HCT116 (cell line): ENCODE measurements at regions of chr17 and their contacts with region 1.

Region 1: GRCh38 chr17:48908047-48908843 is at the start of gene UBE2Z:
- DNase-seq: peak; percentile 94
- ATAC-seq: peak; percentile 92
- H3K4me3 ChIP-seq: peak within 1 kb of the TSS; percentile 70 to 84
- H3K27ac ChIP-seq: peak within 1 kb of the TSS; percentile 92
- H3K4me1 ChIP-seq: peaks cover 18 to 26% of the 10 kb centered on the region in 2 experiments
- H3K27me3 ChIP-seq: no peaks in the 10 kb centered on the region
- CTCF ChIP-seq: 0 out of 6 replicates have a peak, but pooled peaks of 1 of the 3 experiments have one; percentile 9
- POLR2A ChIP-seq: peak; percentile 94
- RAD21 ChIP-seq: no peak
- total RNA-seq, gene UBE2Z: 119 TPM

Region 2: DNA sequence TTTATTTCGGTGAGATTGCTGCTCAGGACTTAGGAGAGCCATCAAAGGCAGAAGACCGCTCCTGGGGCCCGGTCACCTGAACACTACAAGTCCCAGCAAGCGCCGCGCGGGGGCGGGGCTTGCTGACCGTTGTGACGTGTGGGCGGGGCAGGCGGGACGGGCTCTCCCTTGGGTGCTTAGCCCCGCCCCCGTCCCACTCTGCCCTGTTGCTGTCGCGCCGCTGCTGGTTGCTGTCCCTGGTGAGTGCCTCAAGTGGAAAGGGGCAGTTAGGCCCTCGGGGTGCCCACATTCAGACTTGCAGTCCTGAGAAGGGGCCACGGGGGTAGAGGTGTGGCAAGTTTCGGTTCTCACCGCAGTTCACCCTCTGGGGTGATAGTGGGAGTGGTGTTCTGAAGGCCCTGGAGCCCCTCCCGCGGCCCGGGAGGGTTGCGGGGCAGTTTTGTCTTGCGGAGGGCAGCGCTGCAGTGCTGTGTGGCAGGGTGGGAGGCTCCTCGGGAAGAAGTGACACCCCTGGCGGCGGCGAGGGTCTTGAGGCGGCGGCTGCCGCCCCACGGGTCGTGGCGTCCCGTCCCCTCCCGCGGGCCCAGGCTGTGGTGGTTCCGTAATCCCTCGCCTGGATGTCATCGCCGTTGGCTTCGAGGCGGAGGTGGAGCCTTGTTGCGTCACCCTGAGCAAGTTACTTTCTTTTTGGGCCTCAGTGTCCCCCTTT is 77.3 kb before region 1 on chr17 and contains the start of gene CALCOCO2:
- CTCF ChIA-PET with region 1: no interaction called
- POLR2A ChIA-PET with region 1: no interaction called
- RAD21 ChIA-PET with region 1: no interaction called
- intact Hi-C with region 1: loop called (anchors 2 kb)
- DNase-seq: peak; percentile 94
- ATAC-seq: peak; percentile 98
- H3K4me3 ChIP-seq: peak within 1 kb of the TSS; percentile 85 to 91
- H3K27ac ChIP-seq: peak within 1 kb of the TSS; percentile 66
- H3K4me1 ChIP-seq: peaks cover 5 to 32% of the 10 kb centered on the region in 2 experiments; a peak in 2 of 4 replicates
- H3K27me3 ChIP-seq: no peaks in the 10 kb centered on the region
- CTCF ChIP-seq: peak in 2 of 3 experiments; percentile 9 to 11; a peak in 1 of 6 replicates
- POLR2A ChIP-seq: peak; percentile 74
- RAD21 ChIP-seq: no peak
- total RNA-seq, gene CALCOCO2: 151 TPM

Region 3: DNA sequence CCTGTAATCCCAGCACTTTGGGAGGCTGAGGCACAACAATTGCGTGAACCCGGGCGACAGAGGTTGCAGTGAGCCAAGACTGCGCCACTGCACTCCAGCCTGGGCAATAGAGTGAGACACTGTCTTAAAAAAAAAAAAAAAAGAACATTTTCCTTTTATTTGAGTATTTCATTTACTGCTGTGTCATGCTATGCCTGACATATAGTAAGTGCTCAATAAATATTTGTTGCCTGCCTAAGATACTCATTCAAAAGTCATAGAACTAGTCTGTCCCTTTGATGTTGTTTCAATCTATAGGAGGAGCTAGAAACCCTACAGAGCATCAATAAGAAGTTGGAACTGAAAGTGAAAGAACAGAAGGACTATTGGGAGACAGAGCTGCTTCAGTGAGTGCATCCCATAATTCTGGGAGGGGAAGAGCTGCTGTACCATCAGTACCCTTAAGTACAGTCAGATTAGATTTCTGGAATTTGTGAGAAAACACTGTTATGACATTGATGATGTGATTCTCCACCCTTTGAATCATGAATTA is 57.4 kb before region 1 on chr17:
- CTCF ChIA-PET with region 1: no interaction called
- POLR2A ChIA-PET with region 1: no interaction called
- RAD21 ChIA-PET with region 1: no interaction called
- intact Hi-C with region 1: no loop called
- DNase-seq: no peak
- ATAC-seq: no peak
- H3K4me3 ChIP-seq: no peak overlapping the region
- H3K27ac ChIP-seq: no peak overlapping the region
- H3K4me1 ChIP-seq: no peaks in the 10 kb centered on the region
- H3K27me3 ChIP-seq: no peaks in the 10 kb centered on the region
- CTCF ChIP-seq: no peak
- POLR2A ChIP-seq: no peak
- RAD21 ChIP-seq: no peak

Region 4: GRCh38 chr17:48892940-48893645 is 15.2 kb before region 1 on chr17:
- CTCF ChIA-PET with region 1: interaction called, 9 read pairs
- POLR2A ChIA-PET with region 1: interaction called, 34 read pairs
- RAD21 ChIA-PET with region 1: interaction called in 1 of 2 experiments, 7 read pairs
- intact Hi-C with region 1: loop called (anchors 2 kb)
- DNase-seq: no peak
- ATAC-seq: no peak
- H3K4me3 ChIP-seq: peak overlapping the region; percentile 82 to 88
- H3K27ac ChIP-seq: peak overlapping the region; percentile 73
- H3K4me1 ChIP-seq: peaks cover 11 to 26% of the 10 kb centered on the region in 2 experiments; a peak in 3 of 4 replicates
- H3K27me3 ChIP-seq: no peaks in the 10 kb centered on the region
- CTCF ChIP-seq: no peak
- POLR2A ChIP-seq: no peak
- RAD21 ChIP-seq: no peak

Region 5: DNA sequence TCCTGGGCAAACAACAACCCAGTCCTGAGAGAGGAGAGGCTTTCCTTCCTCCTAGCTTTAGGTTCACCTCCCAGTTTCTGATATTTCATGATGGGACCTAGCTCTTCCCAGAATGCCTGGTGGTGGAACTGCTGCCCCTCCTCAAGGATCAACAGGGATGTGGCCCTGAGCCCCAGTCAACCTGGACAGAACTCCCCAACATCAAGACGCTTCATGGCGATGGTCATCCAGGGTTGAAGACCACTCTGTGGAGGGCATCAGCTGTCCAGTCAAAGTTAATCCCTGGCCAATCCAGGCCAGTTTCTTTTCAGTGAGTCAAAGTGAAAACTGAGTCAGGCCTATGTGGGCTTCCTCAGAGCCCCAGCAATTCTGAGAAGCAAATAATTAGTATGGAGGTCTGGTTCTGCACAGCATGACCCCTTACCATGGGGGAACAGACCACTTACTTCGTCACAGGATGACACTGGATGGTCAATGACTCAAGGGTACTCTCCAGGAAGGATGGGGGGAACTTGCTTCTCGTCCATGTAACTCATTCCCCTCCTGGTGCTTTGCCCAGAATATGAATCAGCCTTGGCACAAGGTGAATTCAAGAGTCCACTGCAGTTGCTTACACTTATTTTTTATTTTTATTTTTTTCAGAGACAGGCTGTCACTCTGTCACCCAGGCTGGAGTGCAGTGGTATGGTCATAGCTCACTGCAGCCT is 1423.0 kb after region 1 on chr17:
- CTCF ChIA-PET with region 1: no interaction called
- POLR2A ChIA-PET with region 1: no interaction called
- RAD21 ChIA-PET with region 1: no interaction called
- intact Hi-C with region 1: no loop called
- DNase-seq: no peak
- ATAC-seq: no peak
- H3K4me3 ChIP-seq: no peak overlapping the region
- H3K27ac ChIP-seq: no peak overlapping the region
- H3K4me1 ChIP-seq: no peaks in the 10 kb centered on the region
- H3K27me3 ChIP-seq: no peaks in the 10 kb centered on the region
- CTCF ChIP-seq: no peak
- POLR2A ChIP-seq: no peak
- RAD21 ChIP-seq: no peak